ENCODE measurements at regions of chr1 and their contacts with region 1.

Region 1: GRCh38 chr1:87953732-87954344 is 625.2 kb downstream of the LMO4 start:
- DNase-seq: peak; percentile 48
- ATAC-seq: peak; percentile 74

Region 2: GRCh38 chr1:87131809-87132283 is 822.0 kb before region 1 on chr1:
- intact Hi-C with region 1: loop called (anchors 10 kb)
- DNase-seq: peak; percentile 86
- ATAC-seq: peak; percentile 92

Region 3: GRCh38 chr1:88140325-88140724 is 186.5 kb after region 1 on chr1:
- intact Hi-C with region 1: no loop called
- DNase-seq: no peak
- ATAC-seq: no peak